Panc1 (cell line): ENCODE measurements at regions of chr7 and their contacts with region 1.

Region 1: DNA sequence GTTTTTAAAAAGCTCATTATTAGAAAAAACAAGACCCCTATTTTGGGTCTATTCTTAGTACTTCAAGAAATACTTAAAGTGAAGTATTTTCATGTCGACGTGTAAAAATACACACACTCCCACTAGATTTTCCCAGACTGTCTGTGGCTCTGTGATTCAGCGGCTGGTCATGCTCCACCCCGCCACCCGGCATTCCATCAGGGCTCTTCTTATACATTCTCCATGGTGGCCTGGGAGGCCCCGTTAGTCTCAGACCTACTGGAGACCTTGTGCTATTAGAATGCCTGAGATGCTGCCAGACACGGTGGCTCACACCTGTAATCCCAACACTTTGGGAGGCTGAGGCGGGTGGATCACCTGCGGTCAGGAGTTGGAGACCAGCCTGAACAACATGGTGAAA is 13.1 kb downstream of the TECPR1 start:
- DNase-seq: no peak
- ATAC-seq: no peak
- H3K4me3 ChIP-seq: no peak overlapping the region
- H3K27ac ChIP-seq: no peak overlapping the region
- H3K4me1 ChIP-seq: no peaks in the 10 kb centered on the region
- H3K27me3 ChIP-seq: no peaks in the 10 kb centered on the region
- CTCF ChIP-seq: no peak

Region 2: GRCh38 chr7:98178347-98178746 is 60.6 kb before region 1 on chr7:
- CTCF ChIA-PET with region 1: no interaction called
- POLR2A ChIA-PET with region 1: no interaction called
- in situ Hi-C with region 1: no loop called
- intact Hi-C with region 1: no loop called
- DNase-seq: no peak
- ATAC-seq: 0 out of 2 replicates have a peak, but pooled peaks have one; percentile 30
- H3K4me3 ChIP-seq: no peak overlapping the region
- H3K27ac ChIP-seq: no peak overlapping the region
- H3K4me1 ChIP-seq: no peaks in the 10 kb centered on the region
- H3K27me3 ChIP-seq: no peaks in the 10 kb centered on the region
- CTCF ChIP-seq: no peak

Region 3: DNA sequence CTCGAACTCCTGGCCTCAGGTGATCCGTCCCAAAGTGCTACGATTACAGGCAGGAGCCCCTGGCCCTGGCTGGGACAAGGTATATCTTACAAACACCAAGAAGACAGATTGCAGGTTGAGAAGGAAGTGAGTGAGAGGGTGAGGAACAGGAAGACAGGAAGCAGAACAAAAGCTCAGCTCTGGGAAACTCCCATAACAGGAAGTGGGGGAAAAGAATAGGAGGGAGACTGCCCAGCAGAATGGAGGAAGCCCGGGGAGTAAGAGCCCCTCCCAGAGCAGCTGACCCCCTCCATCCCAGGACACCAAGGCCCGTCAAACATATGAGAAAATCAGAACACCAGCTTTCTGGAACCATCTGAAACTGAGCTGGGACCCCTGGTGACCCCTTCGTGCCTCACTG is 10.1 kb after region 1 on chr7:
- CTCF ChIA-PET with region 1: interaction called, 11 read pairs
- POLR2A ChIA-PET with region 1: no interaction called
- in situ Hi-C with region 1: no loop called
- intact Hi-C with region 1: no loop called
- DNase-seq: no peak
- ATAC-seq: no peak
- H3K4me3 ChIP-seq: no peak overlapping the region
- H3K27ac ChIP-seq: no peak overlapping the region
- H3K4me1 ChIP-seq: peaks cover 9% of the 10 kb centered on the region
- H3K27me3 ChIP-seq: no peaks in the 10 kb centered on the region
- CTCF ChIP-seq: no peak

Region 4: DNA sequence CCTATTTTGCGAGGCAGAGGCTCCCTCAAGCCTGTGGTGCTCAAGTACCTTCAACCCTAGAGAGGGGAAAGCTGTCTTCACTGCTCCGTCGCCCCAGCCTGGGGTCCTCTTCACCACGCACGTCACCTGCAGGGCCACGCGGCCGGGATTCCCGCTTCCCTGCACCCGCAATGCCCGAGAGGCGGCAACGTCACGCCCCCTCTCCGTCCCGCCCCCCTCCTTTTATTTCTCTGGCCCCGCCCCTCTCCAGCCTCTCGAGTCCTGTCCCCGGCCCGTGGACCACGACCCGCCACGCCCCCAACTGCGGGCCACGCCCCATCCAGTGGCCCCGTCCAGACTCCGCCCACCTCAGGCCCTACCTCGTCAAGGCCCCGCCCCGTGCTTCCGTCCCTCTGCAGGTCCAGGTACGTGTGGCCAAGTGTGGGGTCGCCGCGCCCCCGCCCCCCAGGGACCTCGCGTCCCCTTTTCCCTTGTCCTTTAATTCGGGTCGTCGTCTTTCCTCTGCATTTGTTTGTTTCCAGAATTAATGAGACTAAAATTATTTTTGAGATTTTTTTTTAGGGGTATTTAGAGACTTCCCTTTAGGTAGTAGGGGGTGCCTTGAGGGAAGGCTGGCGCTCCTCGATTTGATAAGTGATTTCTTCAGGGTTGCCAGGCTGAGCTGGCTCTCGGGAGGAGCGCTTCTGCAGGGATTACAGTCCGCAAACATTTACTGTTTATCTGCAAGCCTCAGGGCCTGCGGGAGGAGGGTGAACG is 231.7 kb after region 1 on chr7:
- CTCF ChIA-PET with region 1: no interaction called
- POLR2A ChIA-PET with region 1: no interaction called
- in situ Hi-C with region 1: no loop called
- intact Hi-C with region 1: no loop called
- DNase-seq: no peak
- ATAC-seq: peak; percentile 64
- H3K4me3 ChIP-seq: peak overlapping the region; percentile 20 to 40
- H3K27ac ChIP-seq: no peak overlapping the region
- H3K4me1 ChIP-seq: 0 out of 2 replicates have a peak, but pooled peaks cover 2% of the 10 kb centered on the region
- H3K27me3 ChIP-seq: no peaks in the 10 kb centered on the region
- CTCF ChIP-seq: no peak